ENCODE measurements at regions of chr19 and their contacts with region 1.

Region 1: DNA sequence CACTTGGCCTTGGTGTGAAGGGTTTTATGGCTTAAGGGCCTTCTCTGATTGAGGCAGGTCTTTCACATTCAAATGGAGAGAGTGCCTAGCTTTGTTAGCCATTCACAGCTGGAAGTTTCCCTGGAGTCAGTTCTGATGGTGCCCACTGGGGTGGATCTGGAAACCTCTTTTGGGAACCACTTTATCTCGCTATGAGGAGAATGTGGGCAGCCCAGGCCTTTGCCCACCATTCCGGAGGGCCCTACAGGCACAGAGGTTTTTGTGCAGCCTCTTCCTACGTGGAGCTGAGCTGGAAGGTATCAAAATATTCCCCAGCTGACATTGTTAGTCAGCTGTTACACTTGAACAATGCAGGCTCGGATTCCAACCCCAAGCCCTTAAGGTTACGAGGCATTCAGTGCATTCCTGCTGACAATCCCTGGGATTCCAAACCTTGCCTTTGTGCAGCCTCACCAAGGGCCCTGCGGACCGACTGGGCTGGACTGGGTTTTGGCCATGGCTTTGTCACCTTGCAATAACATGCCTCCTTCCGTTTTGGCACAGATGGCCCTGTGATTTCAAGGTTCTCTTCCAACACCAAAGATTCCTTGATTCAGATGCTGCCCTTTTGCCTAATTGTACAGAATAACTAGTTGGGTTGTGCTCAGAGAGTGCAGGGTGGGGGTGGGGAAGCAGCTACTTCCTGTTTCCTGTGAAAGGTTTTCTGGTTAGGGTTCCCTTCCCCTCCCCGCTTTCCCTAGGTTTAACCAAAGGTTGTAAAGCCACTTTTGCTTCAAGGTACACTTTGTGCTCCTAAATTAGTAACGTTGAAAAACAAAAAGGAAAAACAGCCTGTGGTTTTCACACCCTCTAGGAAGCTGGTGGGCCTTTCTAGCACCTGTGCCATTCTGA is 27.0 kb downstream of the SAE1 start:
- DNase-seq: peak in 6 of 10 donors; percentile 4 to 52 (median 38)
- ATAC-seq: peak; percentile 21 to 23
- H3K4me3 Mint-ChIP-seq: peak overlapping the region; percentile 61 to 91 (median 82)
- H3K27ac Mint-ChIP-seq: peak overlapping the region; percentile 83 to 98 (median 93)
- H3K4me1 Mint-ChIP-seq: peaks cover 28 to 77% (median 65%) of the 10 kb centered on the region in 4 donors
- H3K27me3 Mint-ChIP-seq: no peaks in the 10 kb centered on the region

Region 2: DNA sequence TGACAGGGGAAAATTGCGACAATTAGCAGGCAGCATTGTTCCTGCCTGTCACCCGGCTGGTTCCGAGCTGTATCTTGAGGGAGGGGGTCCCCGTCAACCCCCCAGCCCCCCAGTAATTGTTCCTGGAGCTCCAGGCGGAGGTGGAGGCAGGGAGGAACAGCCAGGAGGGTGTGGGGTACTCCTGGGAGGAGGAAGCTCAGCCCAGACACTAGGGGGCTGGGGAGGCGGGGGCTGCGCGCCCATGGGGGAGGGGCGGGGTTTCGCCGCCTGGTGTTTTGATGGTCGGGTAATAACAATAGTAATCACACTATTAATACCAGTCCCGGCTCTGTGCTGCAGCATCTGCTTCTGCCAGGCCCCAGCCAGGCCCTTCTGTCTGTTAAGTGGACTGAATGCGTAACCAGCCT is 129.5 kb before region 1 on chr19:
- POLR2A ChIA-PET with region 1: no interaction called
- DNase-seq: no peak
- ATAC-seq: no peak
- H3K4me3 Mint-ChIP-seq: no peak overlapping the region
- H3K27ac Mint-ChIP-seq: no peak overlapping the region
- H3K4me1 Mint-ChIP-seq: peaks cover 1 to 10% (median 4%) of the 10 kb centered on the region in 4 donors
- H3K27me3 Mint-ChIP-seq: peaks cover 17 to 82% (median 41%) of the 10 kb centered on the region in 5 donors

Region 3: GRCh38 chr19:47176627-47177090 is 19.0 kb after region 1 on chr19:
- POLR2A ChIA-PET with region 1: interaction called, 185 read pairs
- DNase-seq: peak in 8 of 10 donors; percentile 22 to 81 (median 42)
- ATAC-seq: peak; percentile 84 to 94
- H3K4me3 Mint-ChIP-seq: peak overlapping the region; percentile 49 to 88 (median 81)
- H3K27ac Mint-ChIP-seq: peak overlapping the region; percentile 90 to 99 (median 94)
- H3K4me1 Mint-ChIP-seq: peaks cover 30 to 78% (median 65%) of the 10 kb centered on the region in 4 donors
- H3K27me3 Mint-ChIP-seq: no peaks in the 10 kb centered on the region

Region 4: DNA sequence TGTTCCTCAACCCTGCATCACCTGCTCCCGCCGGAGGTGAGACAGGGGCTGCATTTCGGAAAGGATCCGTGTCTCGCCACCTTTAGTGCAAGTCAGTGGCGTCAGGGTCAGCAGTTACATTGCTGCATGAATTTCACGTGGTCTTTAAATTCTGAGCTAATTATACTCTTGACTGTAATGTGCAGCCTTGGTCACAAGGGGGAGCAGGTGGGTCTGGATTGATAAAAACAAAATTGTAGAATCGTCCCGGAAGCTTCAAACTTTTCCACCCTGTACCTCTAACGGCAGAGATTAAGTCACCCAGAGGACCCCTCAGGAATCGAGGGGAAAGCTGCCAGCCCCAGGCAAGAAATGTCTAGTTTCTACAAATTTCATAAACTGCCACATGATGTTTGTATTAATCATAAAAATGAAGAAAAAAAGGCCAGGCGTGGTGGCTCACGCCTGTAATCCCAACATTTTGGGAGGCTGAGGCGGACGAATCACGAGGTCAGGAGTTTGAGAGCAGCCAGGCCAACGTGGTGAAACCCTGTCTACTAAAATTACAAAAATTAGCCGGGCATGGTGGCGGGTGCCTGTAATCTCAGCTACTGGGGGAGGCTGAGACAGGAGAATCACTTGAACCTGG is 53.1 kb after region 1 on chr19:
- POLR2A ChIA-PET with region 1: interaction called, 34 read pairs
- DNase-seq: peak; percentile 58 to 87 (median 78)
- ATAC-seq: peak; percentile 74 to 89
- H3K4me3 Mint-ChIP-seq: peak overlapping the region in 6 of 10 donors; percentile 5 to 46 (median 23)
- H3K27ac Mint-ChIP-seq: peak overlapping the region; percentile 7 to 86 (median 80)
- H3K4me1 Mint-ChIP-seq: peaks cover 8 to 29% (median 17%) of the 10 kb centered on the region in 4 donors
- H3K27me3 Mint-ChIP-seq: no peaks in the 10 kb centered on the region

Measured in naive thymus-derived CD8-positive, alpha-beta T cell (primary cell).